PC-9 (cell line): ENCODE measurements at regions of chr11 and their contacts with region 1.

Region 1: DNA sequence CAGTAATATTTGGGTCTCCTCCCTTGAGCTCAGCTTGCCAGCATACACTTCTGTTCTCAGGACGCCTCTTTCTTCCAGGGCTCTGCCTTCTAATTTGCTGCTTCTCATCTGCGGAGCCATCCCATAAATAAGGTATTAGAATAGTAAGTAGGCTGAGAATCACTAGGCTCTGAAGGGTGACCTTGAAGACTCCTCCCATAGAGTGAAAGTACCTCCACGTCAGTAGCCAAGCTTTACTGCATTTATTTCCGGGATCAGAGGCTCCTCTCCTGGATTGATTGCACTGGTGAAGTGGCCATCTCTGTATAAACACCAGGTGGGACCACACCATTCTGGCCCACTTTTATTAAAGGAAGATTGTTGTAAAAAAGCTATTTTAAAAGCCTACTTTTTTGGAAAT is 315.5 kb downstream of the FAT3 start:
- DNase-seq: no peak
- H3K4me3 ChIP-seq: no peak overlapping the region
- H3K27ac ChIP-seq: no peak overlapping the region
- H3K4me1 ChIP-seq: no peaks in the 10 kb centered on the region
- H3K27me3 ChIP-seq: no peaks in the 10 kb centered on the region
- CTCF ChIP-seq: no peak

Region 2: DNA sequence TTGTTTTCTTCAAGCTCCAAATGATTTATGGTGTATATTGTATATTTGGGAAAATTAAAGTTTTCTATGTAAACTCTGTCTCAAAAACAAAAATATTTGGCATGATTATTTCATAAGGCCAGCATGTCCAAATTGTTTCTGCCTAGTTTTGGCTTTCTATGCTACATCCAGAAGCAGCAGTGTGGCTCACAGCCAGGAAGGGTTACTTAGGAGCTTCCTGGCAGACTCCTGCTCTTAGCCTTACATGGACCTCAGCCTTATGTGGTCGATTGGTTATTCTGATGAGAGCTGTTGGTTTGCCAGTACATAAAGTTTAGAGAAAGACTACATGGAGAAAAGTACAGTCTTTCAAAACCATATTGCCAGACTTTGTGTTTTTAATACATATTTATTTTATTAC is 613.1 kb before region 1 on chr11:
- CTCF ChIA-PET with region 1: no interaction called
- POLR2A ChIA-PET with region 1: no interaction called
- intact Hi-C with region 1: loop called (anchors 10 kb)
- DNase-seq: no peak
- H3K4me3 ChIP-seq: no peak overlapping the region
- H3K27ac ChIP-seq: no peak overlapping the region
- H3K4me1 ChIP-seq: no peaks in the 10 kb centered on the region
- H3K27me3 ChIP-seq: no peaks in the 10 kb centered on the region
- CTCF ChIP-seq: no peak

Region 3: GRCh38 chr11:92765965-92766371 is 225.9 kb after region 1 on chr11:
- CTCF ChIA-PET with region 1: no interaction called
- POLR2A ChIA-PET with region 1: no interaction called
- intact Hi-C with region 1: no loop called
- DNase-seq: peak in 1 of 2 experiments; percentile 4
- H3K4me3 ChIP-seq: no peak overlapping the region
- H3K27ac ChIP-seq: no peak overlapping the region
- H3K4me1 ChIP-seq: no peaks in the 10 kb centered on the region
- H3K27me3 ChIP-seq: no peaks in the 10 kb centered on the region
- CTCF ChIP-seq: no peak